ENCODE measurements at regions of chr11 and their contacts with region 1.

Region 1: DNA sequence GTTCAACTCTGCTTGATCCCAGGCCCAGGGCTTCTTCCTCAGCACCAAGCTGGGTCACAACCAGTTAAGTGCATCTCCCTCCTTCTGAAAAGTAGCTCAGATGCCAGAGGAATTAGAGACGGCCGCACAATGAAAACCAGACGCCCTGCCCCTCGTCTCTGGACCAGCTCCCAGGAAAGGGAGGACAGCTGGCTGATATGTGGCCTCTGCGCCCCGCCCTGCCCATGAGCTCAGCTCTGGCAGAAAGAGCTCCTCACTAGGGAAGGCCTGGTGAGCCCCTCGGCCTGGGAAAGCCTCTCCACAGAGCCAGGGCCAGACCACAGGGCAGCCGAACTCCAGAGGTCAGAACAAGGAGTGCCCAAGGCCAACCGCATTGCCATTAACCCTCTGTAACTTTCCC is 18.1 kb upstream of the SCGB1A1 start:
- DNase-seq: peak; percentile 49 to 80
- ATAC-seq: peak; percentile 55 to 74
- H3K4me3 ChIP-seq: no peak overlapping the region
- H3K27ac ChIP-seq: peak overlapping the region; percentile 1 to 57 (median 57)
- H3K4me1 ChIP-seq: peaks cover 45 to 46% of the 10 kb centered on the region in 2 donors
- H3K27me3 ChIP-seq: no peaks in the 10 kb centered on the region
- CTCF ChIP-seq: no peak
- POLR2A ChIP-seq: no peak

Region 2: GRCh38 chr11:62169091-62169847 is 231.5 kb before region 1 on chr11:
- in situ Hi-C with region 1: no loop called
- intact Hi-C with region 1: no loop called
- DNase-seq: peak in 1 of 2 donors; percentile 50
- ATAC-seq: peak; percentile 19 to 47
- H3K4me3 ChIP-seq: no peak overlapping the region
- H3K27ac ChIP-seq: peak overlapping the region; percentile 1 to 44 (median 32)
- H3K4me1 ChIP-seq: peaks cover 12 to 15% of the 10 kb centered on the region in 2 donors
- H3K27me3 ChIP-seq: no peaks in the 10 kb centered on the region
- CTCF ChIP-seq: no peak
- POLR2A ChIP-seq: no peak

Region 3: GRCh38 chr11:62419314-62419929 is 18.7 kb after region 1 on chr11:
- in situ Hi-C with region 1: no loop called
- intact Hi-C with region 1: loop called (anchors 2 kb)
- DNase-seq: no peak
- ATAC-seq: no peak
- H3K4me3 ChIP-seq: no peak overlapping the region
- H3K27ac ChIP-seq: peak overlapping the region in 3 of 4 donors; percentile 22 to 52 (median 35)
- H3K4me1 ChIP-seq: no peaks in the 10 kb centered on the region
- H3K27me3 ChIP-seq: no peaks in the 10 kb centered on the region
- CTCF ChIP-seq: no peak
- POLR2A ChIP-seq: no peak